ENCODE measurements at regions of chr3 and their contacts with region 1.

Region 1: GRCh38 chr3:182562274-182562673 is 231.0 kb upstream of the ATP11B start:
- DNase-seq: no peak
- H3K4me3 ChIP-seq: no peak overlapping the region
- CTCF ChIP-seq: no peak

Region 2: DNA sequence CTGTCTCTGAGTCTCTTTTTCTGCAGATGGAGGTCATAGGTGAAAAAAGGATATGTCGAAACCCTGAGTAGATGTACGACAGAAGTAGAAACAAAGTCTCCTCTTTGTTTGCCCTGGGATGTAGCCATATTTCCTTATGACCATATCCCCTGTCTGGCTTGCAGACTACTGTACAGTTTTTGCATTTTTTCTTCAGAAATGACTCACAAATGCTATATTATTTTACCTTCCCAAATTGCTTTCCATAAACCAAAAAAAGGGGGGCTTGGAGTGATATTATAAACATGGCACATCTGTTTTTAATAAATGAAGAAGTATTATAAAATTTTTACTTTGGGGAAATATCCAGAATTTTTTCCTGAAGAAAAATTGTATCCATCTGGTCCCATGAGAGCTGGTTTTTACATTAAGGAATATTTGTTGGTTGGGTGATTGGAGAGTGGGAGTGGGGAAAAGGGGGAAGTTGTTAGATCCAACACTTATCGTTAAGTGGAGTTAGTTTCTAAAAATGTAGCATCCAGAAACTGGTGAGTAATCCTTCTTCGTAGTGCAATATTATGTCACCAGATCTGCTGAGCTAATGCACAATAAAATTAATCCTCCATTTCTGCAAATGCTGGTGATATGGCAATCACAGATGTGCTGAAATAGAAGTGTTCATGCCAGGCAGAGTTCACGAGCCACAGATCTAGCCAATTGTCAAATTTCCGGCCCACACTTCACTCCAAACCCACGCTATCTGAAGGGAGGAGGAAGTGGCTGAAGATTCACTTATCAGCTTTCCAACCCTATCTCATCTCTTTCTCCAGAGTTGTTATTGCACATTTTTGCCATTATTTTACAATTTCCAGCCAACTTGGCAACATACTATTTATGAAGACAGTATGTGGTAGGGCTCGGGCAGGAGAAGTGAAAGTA is 82.6 kb before region 1 on chr3:
- in situ Hi-C with region 1: loop called (anchors 5 kb)
- DNase-seq: no peak
- H3K4me3 ChIP-seq: no peak overlapping the region
- CTCF ChIP-seq: no peak

Region 3: DNA sequence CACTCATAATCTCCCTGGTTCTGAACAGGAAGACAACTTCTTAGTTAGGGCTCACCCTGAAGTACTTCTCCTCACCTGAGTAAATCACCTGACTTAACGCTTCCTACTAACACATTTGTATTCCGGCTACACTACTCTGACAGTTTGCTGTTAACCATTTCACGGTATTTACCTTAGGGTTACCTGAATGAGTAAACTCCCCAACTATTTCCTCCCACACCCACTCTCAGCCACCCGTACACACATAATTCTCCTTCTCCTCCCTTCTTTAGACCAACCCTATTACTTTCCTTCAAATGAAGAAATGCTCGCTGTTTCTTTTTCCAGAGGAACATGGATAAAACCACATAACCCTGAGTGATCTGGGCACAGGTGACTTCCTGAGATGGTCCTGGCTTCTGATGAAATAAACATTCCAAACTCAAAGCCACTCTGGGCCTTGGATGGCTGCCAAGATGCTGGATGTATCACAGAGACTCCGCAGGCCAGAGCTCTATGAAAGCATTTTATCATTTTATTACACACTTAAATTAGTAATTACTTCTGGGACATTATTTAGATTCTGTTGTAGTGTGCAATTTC is 47.4 kb after region 1 on chr3:
- in situ Hi-C with region 1: no loop called
- DNase-seq: no peak
- H3K4me3 ChIP-seq: no peak overlapping the region
- CTCF ChIP-seq: no peak